GM12878 (cell line): ENCODE measurements at regions of chr11 and their contacts with region 1.

Region 1: GRCh38 chr11:107549253-107549953 is 16.1 kb downstream of the ALKBH8 start:
- DNase-seq: no peak
- ATAC-seq: peak; percentile 78
- H3K4me3 ChIP-seq: no peak overlapping the region
- H3K27ac ChIP-seq: no peak overlapping the region
- H3K4me1 ChIP-seq: no peaks in the 10 kb centered on the region
- H3K27me3 ChIP-seq: no peaks in the 10 kb centered on the region
- CTCF ChIP-seq: peak; percentile 67 to 74 (median 71)
- EP300 ChIP-seq: no peak
- POLR2A ChIP-seq: no peak
- RAD21 ChIP-seq: peak; percentile 81

Region 2: GRCh38 chr11:107538821-107539220 is 10.6 kb before region 1 on chr11:
- CTCF ChIA-PET with region 1: interaction called, 20 read pairs
- POLR2A ChIA-PET with region 1: no interaction called
- RAD21 ChIA-PET with region 1: interaction called, 3 read pairs
- SMC1A ChIA-PET with region 1: interaction called, 24 read pairs
- in situ Hi-C with region 1: no loop called
- intact Hi-C with region 1: no loop called
- DNase-seq: no peak
- ATAC-seq: no peak
- H3K4me3 ChIP-seq: no peak overlapping the region
- H3K27ac ChIP-seq: no peak overlapping the region
- H3K4me1 ChIP-seq: no peaks in the 10 kb centered on the region
- H3K27me3 ChIP-seq: no peaks in the 10 kb centered on the region
- CTCF ChIP-seq: no peak
- EP300 ChIP-seq: no peak
- POLR2A ChIP-seq: no peak
- RAD21 ChIP-seq: no peak

Region 3: DNA sequence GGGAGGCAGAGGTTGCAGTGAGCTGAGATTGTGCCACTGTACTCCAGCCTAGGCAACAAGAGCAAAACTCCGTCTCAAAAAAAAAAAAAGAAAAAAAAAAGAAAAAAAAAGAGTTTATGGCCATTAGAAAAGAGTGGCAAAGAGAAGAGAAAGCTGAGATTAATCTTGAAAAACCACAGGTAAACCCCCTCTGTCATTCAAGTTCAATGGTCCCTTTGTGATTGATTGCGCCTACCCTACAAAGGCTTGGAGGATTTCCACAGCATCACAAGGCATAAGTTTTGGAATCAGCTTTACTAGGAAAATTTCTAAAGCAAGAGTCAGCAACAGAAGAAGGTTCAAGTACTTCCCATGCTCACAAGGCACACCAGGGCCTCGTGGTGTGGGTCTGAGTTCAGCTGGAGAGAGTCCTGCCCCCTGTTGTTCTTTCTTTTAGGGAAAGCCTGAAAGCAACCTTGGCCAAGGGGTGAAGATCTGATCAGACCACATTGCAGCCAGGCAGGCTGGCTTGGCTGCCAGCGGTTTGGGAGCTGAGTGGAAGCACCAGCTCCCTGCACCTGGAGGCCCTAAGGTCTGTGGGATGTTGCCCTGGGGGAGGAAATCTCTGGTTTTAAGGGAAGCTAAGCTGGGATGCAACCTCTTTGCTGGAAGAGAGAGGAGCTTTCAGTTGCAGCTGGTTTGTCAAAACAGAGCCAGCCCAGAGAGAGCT is 120.6 kb after region 1 on chr11:
- CTCF ChIA-PET with region 1: interaction called, 13 read pairs
- POLR2A ChIA-PET with region 1: no interaction called
- RAD21 ChIA-PET with region 1: interaction called, 4 read pairs
- SMC1A ChIA-PET with region 1: no interaction called
- in situ Hi-C with region 1: no loop called
- intact Hi-C with region 1: no loop called
- DNase-seq: no peak
- ATAC-seq: peak; percentile 54
- H3K4me3 ChIP-seq: no peak overlapping the region
- H3K27ac ChIP-seq: no peak overlapping the region
- H3K4me1 ChIP-seq: no peaks in the 10 kb centered on the region
- H3K27me3 ChIP-seq: no peaks in the 10 kb centered on the region; a peak in 1 of 4 replicates
- CTCF ChIP-seq: no peak
- EP300 ChIP-seq: no peak
- POLR2A ChIP-seq: no peak
- RAD21 ChIP-seq: no peak

Region 4: GRCh38 chr11:107785401-107785800 is 236.0 kb after region 1 on chr11:
- CTCF ChIA-PET with region 1: no interaction called
- POLR2A ChIA-PET with region 1: no interaction called
- RAD21 ChIA-PET with region 1: no interaction called
- SMC1A ChIA-PET with region 1: no interaction called
- in situ Hi-C with region 1: no loop called
- intact Hi-C with region 1: no loop called
- DNase-seq: no peak
- ATAC-seq: peak; percentile 63
- H3K4me3 ChIP-seq: no peak overlapping the region
- H3K27ac ChIP-seq: no peak overlapping the region
- H3K4me1 ChIP-seq: no peaks in the 10 kb centered on the region
- H3K27me3 ChIP-seq: no peaks in the 10 kb centered on the region
- CTCF ChIP-seq: no peak
- EP300 ChIP-seq: no peak
- POLR2A ChIP-seq: no peak
- RAD21 ChIP-seq: no peak